ENCODE measurements at regions of chr1 and their contacts with region 1.

Region 1: DNA sequence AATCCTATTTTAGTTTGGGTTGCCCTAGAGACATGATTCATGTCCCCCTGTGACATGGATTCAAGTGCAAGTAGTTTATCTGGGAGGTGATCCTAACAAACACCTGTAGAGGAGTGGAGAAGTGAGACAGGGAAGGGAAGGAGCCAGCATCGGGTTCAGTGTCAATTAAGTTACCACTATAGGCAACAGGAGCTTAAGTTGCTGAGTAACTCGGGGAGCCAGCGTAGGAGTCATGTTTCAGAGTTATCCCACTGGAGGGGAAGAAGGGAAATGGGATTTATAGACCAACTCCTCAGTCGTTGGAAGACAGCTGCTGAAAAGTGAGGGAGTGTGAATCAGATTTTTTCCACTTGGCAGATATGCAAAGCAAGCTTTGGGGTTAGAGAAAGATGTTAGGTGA is 54.9 kb downstream of the SLC30A7 start:
- DNase-seq: no peak
- ATAC-seq: no peak
- H3K4me3 ChIP-seq: no peak overlapping the region
- H3K4me3 Mint-ChIP-seq: peak overlapping the region; percentile 67
- H3K27ac ChIP-seq: peak overlapping the region; percentile 34 to 50
- H3K27ac Mint-ChIP-seq: peak overlapping the region; percentile 65
- H3K4me1 ChIP-seq: peaks cover 33% of the 10 kb centered on the region in 2 donors
- H3K4me1 Mint-ChIP-seq: peaks cover 59% of the 10 kb centered on the region
- H3K27me3 ChIP-seq: no peaks in the 10 kb centered on the region
- H3K27me3 Mint-ChIP-seq: no peaks in the 10 kb centered on the region
- CTCF ChIP-seq: no peak

Region 2: DNA sequence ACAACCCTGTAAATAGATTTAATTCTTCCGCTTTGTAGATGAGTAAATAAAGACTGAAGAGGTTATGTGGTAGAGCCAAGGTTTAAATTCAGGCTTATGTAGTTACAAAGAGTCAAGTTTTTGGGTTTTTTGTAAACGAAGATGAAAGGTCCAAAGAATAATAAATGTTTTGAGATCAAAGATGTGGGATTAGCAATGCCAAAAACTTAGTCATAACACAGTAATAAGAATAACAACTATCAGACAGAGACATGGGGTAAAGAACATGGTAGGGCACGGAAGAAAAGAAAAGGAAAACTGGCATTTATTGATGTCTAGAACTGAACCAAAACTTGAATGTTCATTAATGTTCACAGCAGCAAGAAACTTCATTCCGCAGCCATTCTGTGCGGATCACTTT is 99.1 kb before region 1 on chr1:
- CTCF ChIA-PET with region 1: no interaction called
- POLR2A ChIA-PET with region 1: no interaction called
- intact Hi-C with region 1: no loop called
- DNase-seq: no peak
- ATAC-seq: no peak
- H3K4me3 ChIP-seq: no peak overlapping the region
- H3K4me3 Mint-ChIP-seq: no peak overlapping the region
- H3K27ac ChIP-seq: no peak overlapping the region
- H3K27ac Mint-ChIP-seq: no peak overlapping the region
- H3K4me1 ChIP-seq: no peaks in the 10 kb centered on the region
- H3K4me1 Mint-ChIP-seq: no peaks in the 10 kb centered on the region
- H3K27me3 ChIP-seq: no peaks in the 10 kb centered on the region
- H3K27me3 Mint-ChIP-seq: peaks cover 33% of the 10 kb centered on the region
- CTCF ChIP-seq: no peak

Region 3: DNA sequence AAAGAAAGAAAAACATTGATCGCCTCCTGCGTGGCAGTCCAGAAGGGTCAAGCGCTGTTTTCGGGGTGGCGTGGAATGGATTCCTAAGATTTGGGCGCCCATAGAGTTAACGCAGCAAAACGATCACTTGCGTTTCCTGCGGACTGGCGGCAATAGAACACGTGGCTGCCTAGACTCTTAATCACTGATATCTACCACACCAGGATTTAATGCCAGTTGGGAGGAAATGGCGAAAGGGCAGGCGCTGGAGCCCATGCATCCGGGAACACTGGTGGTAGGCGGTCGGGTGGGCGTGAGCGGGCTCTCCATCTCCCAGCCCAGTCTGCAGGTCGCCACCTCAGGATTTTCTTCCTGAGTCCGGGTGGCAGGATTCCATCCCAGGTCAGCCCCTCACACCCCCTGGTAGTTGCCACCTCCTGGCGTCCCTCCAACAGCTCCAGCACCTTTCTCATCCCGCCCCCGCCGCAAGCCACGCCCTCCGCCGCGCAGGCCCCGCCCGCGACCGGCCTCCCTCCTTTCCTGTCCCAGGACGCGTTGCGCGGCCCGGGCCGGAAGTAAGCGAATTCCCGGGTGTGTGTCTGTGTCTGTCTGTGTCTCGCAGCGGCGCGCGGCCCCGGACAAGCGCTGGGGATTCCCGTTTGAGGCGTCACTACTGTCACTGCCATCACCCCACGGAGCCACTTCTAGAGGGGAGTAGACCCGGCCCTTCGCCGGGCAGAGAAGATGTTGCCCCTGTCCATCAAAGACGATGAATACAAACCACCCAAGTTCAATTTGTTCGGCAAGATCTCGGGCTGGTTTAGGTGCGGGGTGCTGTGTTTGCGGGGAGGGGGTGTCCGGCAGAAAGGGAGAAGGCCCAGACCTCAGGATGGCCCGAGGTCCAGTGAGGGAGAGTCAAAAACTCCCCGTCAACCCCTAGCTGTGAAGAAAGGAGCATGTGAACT is 55.0 kb before region 1 on chr1 and contains the start of gene SLC30A7:
- CTCF ChIA-PET with region 1: no interaction called
- POLR2A ChIA-PET with region 1: no interaction called
- intact Hi-C with region 1: loop called (anchors 2 kb)
- DNase-seq: peak; percentile 95
- ATAC-seq: peak; percentile 87
- H3K4me3 ChIP-seq: peak within 1 kb of the TSS; percentile 75 to 99 (median 98)
- H3K4me3 Mint-ChIP-seq: peak within 1 kb of the TSS; percentile 94
- H3K27ac ChIP-seq: peak within 1 kb of the TSS; percentile 85 to 97
- H3K27ac Mint-ChIP-seq: peak within 1 kb of the TSS; percentile 94
- H3K4me1 ChIP-seq: peaks cover 10 to 11% of the 10 kb centered on the region in 2 donors
- H3K4me1 Mint-ChIP-seq: peaks cover 32% of the 10 kb centered on the region
- H3K27me3 ChIP-seq: no peaks in the 10 kb centered on the region
- H3K27me3 Mint-ChIP-seq: no peaks in the 10 kb centered on the region
- CTCF ChIP-seq: no peak
- total RNA-seq, gene SLC30A7: 26.7 and 28.6 TPM in 2 replicates

Region 4: DNA sequence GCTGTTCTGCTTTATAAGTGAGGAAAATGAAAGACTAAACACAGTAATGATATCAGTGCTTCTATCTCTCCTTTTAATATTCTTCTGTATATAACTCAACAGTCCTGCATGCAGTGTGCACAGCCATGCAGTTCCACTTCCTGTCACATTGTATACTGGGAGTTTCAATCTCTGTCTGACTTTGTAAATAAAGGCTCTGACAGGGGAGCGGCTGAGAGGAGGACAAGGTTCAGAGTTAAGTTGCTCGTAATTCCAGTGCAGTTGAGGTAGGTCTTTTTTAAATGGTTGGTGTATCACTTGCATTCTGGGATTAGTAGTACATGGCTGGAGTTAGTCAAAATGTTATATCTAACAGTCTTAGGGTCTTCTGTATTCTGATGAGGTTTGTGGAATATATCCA is 781.5 kb after region 1 on chr1:
- CTCF ChIA-PET with region 1: no interaction called
- POLR2A ChIA-PET with region 1: no interaction called
- intact Hi-C with region 1: no loop called
- DNase-seq: no peak
- ATAC-seq: no peak
- H3K4me3 ChIP-seq: no peak overlapping the region
- H3K4me3 Mint-ChIP-seq: no peak overlapping the region
- H3K27ac ChIP-seq: no peak overlapping the region
- H3K27ac Mint-ChIP-seq: no peak overlapping the region
- H3K4me1 ChIP-seq: no peaks in the 10 kb centered on the region
- H3K4me1 Mint-ChIP-seq: no peaks in the 10 kb centered on the region
- H3K27me3 ChIP-seq: peaks cover 0 to 2% (median 0%) of the 10 kb centered on the region in 4 experiments
- H3K27me3 Mint-ChIP-seq: no peaks in the 10 kb centered on the region
- CTCF ChIP-seq: no peak